Left cardiac atrium (tissue), 4 donors: ENCODE measurements at regions of chr9 and their contacts with region 1.

Region 1: DNA sequence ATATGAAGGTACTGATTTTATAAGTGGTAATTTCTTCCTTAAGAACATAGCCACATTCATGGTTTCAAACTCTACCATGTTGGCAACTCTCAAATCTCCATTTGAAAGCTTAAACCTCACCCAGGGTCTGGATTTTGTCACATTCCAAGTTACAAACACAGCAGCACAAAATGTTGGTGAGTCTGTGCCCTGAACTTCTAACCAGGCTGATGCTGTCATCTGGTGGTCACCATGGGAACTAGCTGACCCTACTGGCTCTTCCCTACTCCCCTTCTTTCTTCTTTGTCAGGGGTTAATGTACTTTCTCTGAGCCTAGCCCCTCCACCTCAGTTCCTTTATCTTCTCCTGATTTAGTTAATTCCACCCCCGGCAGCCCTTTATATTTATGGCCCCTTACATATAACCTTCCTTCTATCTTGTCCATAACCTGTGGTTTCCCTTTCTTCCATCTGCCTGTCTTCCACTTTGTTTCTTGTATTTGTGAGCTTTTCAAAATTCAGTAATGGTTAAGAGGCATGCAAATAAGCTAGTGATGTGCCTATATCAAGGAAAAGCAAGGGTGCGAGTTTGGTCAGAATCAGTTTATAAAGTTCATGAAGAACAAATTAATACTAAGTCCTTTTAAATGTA is 35.9 kb downstream of the TGFBR1 start:
- DNase-seq: peak; percentile 39
- ATAC-seq: peak; percentile 82 to 88

Region 2: DNA sequence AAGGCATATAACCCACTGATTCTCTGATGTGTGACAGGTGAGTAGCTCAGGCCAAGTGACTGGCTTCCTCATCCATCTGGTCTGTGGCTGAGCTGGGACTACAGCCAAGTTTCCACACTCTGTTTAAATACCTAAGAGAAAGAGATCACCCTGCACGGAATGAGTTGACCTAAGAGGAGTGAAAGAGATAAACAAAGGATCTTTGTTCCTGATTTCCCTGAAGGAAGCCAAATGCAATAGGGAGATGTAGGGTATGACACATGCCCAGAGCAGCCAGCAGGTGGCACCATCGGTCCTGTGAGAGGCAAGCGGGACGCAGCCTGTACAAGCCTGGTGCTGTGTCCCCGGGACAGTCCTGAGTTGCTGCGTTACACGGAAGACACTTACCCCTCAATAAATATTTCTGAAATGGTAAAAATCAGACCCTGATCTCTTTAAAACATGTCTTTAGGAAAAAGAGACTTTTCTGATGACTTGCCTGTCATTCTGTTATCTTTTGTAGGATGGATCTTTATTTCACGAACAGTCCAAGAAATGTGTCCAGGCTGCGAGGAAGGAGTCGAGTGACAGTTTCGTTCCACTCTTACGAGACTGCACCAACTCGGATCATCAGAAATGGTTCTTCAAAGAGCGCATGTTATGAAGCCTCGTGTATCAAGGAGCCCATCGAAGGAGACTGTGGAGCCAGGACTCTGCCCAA is 292.2 kb before region 1 on chr9:
- intact Hi-C with region 1: loop called in 1 of 2 experiments (anchors 5 kb)
- DNase-seq: peak; percentile 93
- ATAC-seq: peak; percentile 98 to 99

Region 3: GRCh38 chr9:98860871-98861293 is 279.9 kb before region 1 on chr9:
- intact Hi-C with region 1: loop called (anchors 2 to 5 kb)
- DNase-seq: peak; percentile 85
- ATAC-seq: peak; percentile 86 to 88

Region 4: GRCh38 chr9:98998441-98999151 is 142.2 kb before region 1 on chr9:
- intact Hi-C with region 1: loop called in 1 of 2 experiments (anchors 5 kb)
- DNase-seq: peak; percentile 88
- ATAC-seq: peak; percentile 76 to 80

Region 5: DNA sequence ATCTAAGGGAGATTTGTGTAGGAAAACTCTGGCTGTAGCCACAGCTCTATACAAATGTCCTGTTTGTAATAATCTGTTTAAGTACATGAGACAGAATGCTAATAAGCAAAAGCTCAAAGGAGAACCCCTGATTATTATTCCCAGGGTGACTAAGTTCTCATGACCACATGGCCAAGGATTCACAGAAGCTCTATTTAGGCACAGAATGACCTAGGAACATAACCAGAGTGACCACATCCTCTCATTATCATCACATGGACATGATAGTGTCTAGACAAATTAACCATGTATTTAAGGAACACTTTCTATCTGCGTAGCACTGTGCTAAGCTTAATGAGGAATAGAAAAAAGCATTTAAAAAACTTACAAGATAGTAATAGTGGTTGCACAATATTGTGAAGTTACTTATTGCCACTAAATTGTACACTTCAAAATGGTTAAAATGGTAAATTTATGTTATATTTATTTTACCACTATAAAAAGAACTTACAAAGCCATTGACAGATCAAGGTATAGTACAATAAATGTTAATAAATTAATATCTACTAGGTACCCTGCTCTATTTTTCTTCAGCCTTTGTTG is 822.0 kb after region 1 on chr9:
- intact Hi-C with region 1: no loop called
- DNase-seq: no peak
- ATAC-seq: no peak